ENCODE measurements at regions of chr7 and their contacts with region 1.

Region 1: GRCh38 chr7:41705109-41705901 is 2.4 kb upstream of the INHBA start:
- DNase-seq: peak; percentile 93
- H3K27ac ChIP-seq: peak overlapping the region; percentile 67
- CTCF ChIP-seq: peak; percentile 98

Region 2: DNA sequence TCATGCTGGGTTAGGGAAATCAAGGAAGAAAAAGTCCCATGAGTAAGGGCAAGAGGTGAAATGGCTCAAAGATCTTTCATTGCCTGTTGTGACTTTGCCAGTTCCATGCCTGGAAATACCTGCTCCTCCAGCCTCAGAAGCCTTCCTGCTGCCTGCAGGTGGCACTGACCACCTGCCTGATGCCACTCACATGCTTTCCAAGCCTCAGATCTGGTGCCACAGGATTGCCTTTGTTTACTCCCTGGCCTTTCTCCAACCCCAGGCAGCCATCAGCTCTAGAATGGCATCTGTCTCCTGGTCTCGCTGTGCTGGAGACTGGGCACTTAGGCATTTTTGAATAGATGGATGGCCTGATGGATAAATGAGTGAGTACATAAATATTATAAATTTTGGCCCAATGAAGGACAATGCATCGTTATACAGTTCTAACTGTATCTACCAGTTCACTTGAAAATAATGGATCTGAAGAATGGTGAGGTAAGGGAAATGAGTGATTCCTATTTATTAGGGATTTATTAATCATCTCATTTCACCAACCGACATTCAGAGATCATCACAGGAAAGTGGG is 659.7 kb before region 1 on chr7:
- CTCF ChIA-PET with region 1: interaction called, 24 read pairs
- POLR2A ChIA-PET with region 1: no interaction called
- DNase-seq: peak; percentile 53
- H3K27ac ChIP-seq: no peak overlapping the region
- CTCF ChIP-seq: no peak; the same call in 1 of the 2 replicates

Region 3: GRCh38 chr7:41508755-41509154 is 196.6 kb before region 1 on chr7:
- CTCF ChIA-PET with region 1: no interaction called
- POLR2A ChIA-PET with region 1: no interaction called
- DNase-seq: no peak
- H3K27ac ChIP-seq: no peak overlapping the region
- CTCF ChIP-seq: no peak

Region 4: DNA sequence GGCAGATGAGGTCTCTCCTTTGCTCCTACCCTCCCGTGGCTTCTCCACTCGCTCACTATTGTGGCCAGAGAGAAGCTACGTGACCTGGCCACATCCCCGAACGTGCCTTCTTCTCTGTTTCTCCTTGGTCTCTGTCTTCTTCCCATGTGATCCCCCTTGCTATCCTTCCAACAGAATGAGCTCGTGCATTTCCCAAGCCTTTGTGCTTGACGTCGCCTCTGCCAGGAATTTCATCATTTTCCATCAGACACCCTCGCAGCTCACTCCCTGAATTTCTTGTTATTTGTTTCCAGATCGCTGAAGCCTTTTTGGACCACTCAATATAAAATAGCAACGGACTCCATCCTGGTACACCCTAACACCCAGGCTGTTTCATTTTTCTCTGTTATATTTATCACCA is 11.4 kb after region 1 on chr7:
- CTCF ChIA-PET with region 1: interaction called, 10 read pairs
- POLR2A ChIA-PET with region 1: no interaction called
- DNase-seq: no peak
- H3K27ac ChIP-seq: no peak overlapping the region
- CTCF ChIP-seq: no peak